Mucosa of descending colon (tissue), 3 donors: ENCODE measurements at regions of chr9 and their contacts with region 1.

Region 1: DNA sequence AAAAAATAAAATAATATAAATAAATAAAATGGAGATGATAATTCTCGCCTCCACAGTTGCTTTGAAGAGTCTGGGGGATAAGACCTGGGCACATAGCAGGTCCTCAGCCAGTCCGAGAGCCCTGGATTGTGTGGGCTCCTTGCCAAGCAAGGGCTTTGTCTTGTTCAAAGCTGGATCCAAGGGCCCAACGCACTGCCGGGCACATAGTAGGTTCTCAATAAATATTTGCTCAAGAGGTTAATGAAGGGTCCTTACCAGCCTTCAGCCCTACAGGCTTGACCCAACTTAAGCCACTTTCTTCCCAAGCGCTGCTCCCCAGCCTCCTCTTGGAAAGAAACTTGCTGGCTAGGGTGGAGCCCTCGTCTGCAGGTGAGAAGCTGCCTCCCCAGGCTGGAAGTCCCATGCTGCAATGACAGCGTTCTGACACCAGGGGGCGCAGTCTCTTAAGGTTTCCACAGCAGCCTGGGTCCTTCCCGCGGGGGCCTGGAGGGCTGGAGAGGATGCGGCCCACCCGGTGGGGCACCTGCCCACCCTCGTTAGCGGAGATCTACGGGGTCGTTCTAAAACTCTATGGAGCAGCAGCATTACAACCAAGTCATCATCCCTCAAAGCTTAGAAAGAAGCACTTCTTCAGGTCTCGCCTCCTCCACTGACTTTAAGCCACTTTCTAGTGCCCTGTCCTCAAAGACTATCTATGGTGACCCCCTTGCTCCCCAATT is 115.2 kb downstream of the LHX2 start:
- DNase-seq: peak; percentile 80 to 85 (median 84)
- ATAC-seq: peak; percentile 94
- H3K4me3 ChIP-seq: no peak overlapping the region
- H3K4me1 ChIP-seq: no peaks in the 10 kb centered on the region
- CTCF ChIP-seq: peak; percentile 96

Region 2: DNA sequence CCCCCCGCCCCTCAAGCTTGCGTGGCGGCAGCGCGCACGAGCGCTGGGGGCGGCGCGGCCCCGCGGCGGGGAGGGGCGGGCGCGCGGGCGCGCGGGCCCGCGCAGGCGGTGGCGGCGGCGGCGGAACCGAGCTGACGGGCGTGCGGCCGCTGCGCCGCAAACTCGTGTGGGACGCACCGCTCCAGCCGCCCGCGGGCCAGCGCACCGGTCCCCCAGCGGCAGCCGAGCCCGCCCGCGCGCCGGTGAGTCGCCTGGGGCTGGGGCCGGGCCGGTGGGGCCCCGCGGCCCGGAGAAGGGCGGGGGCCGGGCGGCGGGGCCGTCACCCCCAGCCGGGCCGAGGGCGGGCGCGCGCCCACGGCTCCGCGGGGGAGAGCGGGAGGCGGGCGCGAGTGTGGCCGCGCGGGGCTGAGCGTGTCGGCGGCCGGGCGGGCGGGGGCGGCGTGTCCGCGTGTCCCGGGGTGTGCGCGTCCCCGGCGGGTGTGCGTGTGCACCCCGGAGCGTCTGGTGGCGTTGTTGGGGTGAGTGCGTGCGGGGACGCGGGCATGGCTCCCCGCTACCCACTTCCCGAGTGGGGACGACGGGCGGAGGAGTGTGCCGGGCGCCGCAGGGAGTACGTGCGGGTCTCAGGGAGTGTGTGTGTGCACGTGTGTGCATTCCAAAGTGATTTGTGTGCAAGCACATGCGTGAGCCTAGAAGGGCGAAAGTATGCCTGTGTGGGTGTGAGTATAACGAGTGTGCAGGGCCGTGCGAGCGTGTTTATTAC is 131.3 kb after region 1 on chr9 and contains the start of gene NEK6:
- intact Hi-C with region 1: no loop called
- DNase-seq: peak in 2 of 3 donors; percentile 61 to 64
- ATAC-seq: peak; percentile 46
- H3K4me3 ChIP-seq: peak within 1 kb of the TSS; percentile 81
- H3K4me1 ChIP-seq: peaks cover 26% of the 10 kb centered on the region
- CTCF ChIP-seq: no peak
- total RNA-seq, gene NEK6: 41.1 to 65.0 (median 51.8) TPM

Region 3: GRCh38 chr9:124320062-124320973 is 193.6 kb after region 1 on chr9:
- intact Hi-C with region 1: loop called (anchors 5 kb)
- DNase-seq: peak in 2 of 3 donors; percentile 82 to 86
- ATAC-seq: peak; percentile 89
- H3K4me3 ChIP-seq: no peak overlapping the region
- H3K4me1 ChIP-seq: no peaks in the 10 kb centered on the region
- CTCF ChIP-seq: peak; percentile 76

Region 4: DNA sequence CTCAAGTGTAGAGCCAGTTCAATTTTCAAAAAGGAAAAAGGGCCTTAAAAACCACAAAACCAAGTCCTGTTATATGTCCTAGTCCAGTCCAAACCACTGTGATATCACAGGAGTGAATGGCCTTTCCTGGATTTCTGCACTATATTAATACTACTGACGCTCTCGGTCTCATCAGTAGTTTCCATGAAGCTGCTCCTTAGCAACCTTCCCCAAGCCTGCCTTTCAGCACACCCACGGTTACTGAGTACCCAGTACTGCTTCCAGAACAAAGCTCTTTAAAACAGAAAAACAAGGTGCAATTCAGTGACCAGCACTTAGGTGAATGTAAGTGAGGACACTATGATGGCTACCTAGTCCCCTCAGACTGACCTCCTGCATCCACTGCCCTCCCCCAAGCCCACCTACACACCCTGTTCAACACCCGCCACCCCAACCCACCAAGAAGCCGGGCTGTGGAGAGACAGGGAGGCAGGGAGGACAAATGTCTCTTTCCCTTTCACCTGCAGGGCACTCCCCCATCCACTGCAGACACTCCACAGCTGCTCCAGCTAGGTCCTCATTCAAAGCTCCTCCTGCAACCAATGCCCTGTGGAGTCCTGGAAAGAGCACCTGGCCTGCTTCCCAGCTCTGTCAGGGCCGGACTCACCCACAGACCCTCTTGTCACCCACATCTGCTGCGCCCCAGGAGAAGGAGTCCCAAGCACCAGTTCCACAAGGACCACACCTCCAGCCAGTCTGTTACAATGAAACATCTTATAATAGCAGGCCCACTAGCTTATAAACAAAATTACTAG is 262.6 kb after region 1 on chr9:
- intact Hi-C with region 1: loop called in 1 of 2 experiments (anchors 5 kb)
- DNase-seq: no peak
- ATAC-seq: no peak
- H3K4me3 ChIP-seq: no peak overlapping the region
- H3K4me1 ChIP-seq: peaks cover 31% of the 10 kb centered on the region
- CTCF ChIP-seq: no peak